A673 (cell line): ENCODE measurements at regions of chr12 and their contacts with region 1.

Region 1: GRCh38 chr12:62519043-62519442 is 52.4 kb downstream of the MON2 start:
- DNase-seq: no peak
- H3K4me3 ChIP-seq: no peak overlapping the region
- H3K27ac ChIP-seq: no peak overlapping the region
- H3K4me1 ChIP-seq: peaks cover 13% of the 10 kb centered on the region
- H3K27me3 ChIP-seq: no peaks in the 10 kb centered on the region
- CTCF ChIP-seq: no peak

Region 2: GRCh38 chr12:60594035-60594711 is 1924.9 kb before region 1 on chr12:
- CTCF ChIA-PET with region 1: no interaction called
- POLR2A ChIA-PET with region 1: no interaction called
- intact Hi-C with region 1: no loop called
- DNase-seq: no peak
- H3K4me3 ChIP-seq: no peak overlapping the region
- H3K27ac ChIP-seq: no peak overlapping the region
- H3K4me1 ChIP-seq: no peaks in the 10 kb centered on the region
- H3K27me3 ChIP-seq: no peaks in the 10 kb centered on the region
- CTCF ChIP-seq: no peak

Region 3: GRCh38 chr12:64286521-64286920 is 1767.5 kb after region 1 on chr12:
- CTCF ChIA-PET with region 1: no interaction called
- POLR2A ChIA-PET with region 1: no interaction called
- intact Hi-C with region 1: loop called (anchors 10 kb)
- DNase-seq: no peak
- H3K4me3 ChIP-seq: no peak overlapping the region
- H3K27ac ChIP-seq: no peak overlapping the region
- H3K4me1 ChIP-seq: no peaks in the 10 kb centered on the region
- H3K27me3 ChIP-seq: no peaks in the 10 kb centered on the region
- CTCF ChIP-seq: no peak